Caco-2 (cell line): ENCODE measurements at regions of chr16 and their contacts with region 1.

Region 1: GRCh38 chr16:29862884-29863668 is at the start of gene CDIPT:
- DNase-seq: peak; percentile 92 to 96
- H3K4me3 ChIP-seq: peak within 1 kb of the TSS; percentile 80
- H3K4me3 Mint-ChIP-seq: peak within 1 kb of the TSS; percentile 93
- H3K27ac Mint-ChIP-seq: peak within 1 kb of the TSS; percentile 100
- H3K4me1 ChIP-seq: peaks cover 6% of the 10 kb centered on the region; the same call in 1 of the 2 replicates
- H3K4me1 Mint-ChIP-seq: peaks cover 6% of the 10 kb centered on the region
- H3K27me3 ChIP-seq: no peaks in the 10 kb centered on the region
- H3K27me3 Mint-ChIP-seq: no peaks in the 10 kb centered on the region
- CTCF ChIP-seq: peak; percentile 13 to 66
- total RNA-seq, gene CDIPT: 56.6 and 57.1 TPM in 2 replicates

Region 2: DNA sequence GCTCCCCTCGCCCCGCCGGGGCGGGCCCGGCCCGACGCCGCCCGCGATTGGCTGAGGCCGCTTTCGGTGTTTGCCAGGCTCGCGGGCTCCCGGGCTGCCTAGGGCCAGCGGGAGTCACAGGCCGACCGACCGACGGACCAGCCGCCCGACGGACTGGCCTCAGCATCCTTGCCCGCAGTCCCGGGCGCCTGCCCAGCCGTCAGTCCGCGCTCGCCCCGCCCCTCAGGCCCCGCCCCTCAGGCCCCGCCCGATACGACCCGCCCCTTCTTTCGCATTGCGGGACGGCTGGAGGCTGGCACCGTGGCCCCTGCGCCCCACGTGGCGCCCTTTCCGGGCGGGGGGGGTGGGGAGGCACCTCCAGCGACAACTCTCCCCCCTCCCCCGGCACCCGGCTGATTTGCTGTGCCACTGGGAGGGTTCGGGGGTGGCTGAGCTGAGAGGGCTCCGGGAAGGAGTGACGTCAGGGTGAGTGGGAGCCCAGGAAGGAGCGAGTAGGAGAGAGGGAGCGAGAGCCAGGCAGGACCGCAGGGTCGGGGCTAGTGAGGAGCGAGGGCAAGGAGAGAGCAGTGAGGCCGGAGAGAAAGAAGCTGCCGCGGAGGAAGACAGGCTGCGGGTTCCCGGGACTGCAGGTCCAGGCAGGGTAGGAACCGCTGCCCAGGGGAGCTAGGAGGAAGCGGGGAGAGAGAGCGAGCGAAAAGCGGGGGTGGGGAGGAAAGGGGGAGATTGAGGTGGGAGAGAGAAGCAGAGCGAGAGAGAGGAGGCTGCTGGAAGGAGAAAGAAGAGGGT is 37.2 kb after region 1 on chr16 and contains the start of gene ASPHD1:
- CTCF ChIA-PET with region 1: interaction called, 3 read pairs
- POLR2A ChIA-PET with region 1: interaction called, 3 read pairs
- intact Hi-C with region 1: loop called (anchors 2 kb)
- DNase-seq: peak; percentile 73 to 83
- H3K4me3 ChIP-seq: peak within 1 kb of the TSS; percentile 66
- H3K4me3 Mint-ChIP-seq: peak within 1 kb of the TSS; percentile 93
- H3K27ac Mint-ChIP-seq: peak within 1 kb of the TSS; percentile 88
- H3K4me1 ChIP-seq: peaks cover 22% of the 10 kb centered on the region; the same call in 1 of the 2 replicates
- H3K4me1 Mint-ChIP-seq: peaks cover 22% of the 10 kb centered on the region
- H3K27me3 ChIP-seq: no peaks in the 10 kb centered on the region
- H3K27me3 Mint-ChIP-seq: no peaks in the 10 kb centered on the region
- CTCF ChIP-seq: no peak
- total RNA-seq, gene ASPHD1: 13.2 and 14.7 TPM in 2 replicates